Activated naive CD4-positive, alpha-beta T cell treated with anti-CD3 and anti-CD28 coated beads, Interleukin-2, amount 10 ng/mL, durations not matched to agents 7 days and 5 days (primary cell): ENCODE measurements at regions of chr11 and their contacts with region 1.

Region 1: DNA sequence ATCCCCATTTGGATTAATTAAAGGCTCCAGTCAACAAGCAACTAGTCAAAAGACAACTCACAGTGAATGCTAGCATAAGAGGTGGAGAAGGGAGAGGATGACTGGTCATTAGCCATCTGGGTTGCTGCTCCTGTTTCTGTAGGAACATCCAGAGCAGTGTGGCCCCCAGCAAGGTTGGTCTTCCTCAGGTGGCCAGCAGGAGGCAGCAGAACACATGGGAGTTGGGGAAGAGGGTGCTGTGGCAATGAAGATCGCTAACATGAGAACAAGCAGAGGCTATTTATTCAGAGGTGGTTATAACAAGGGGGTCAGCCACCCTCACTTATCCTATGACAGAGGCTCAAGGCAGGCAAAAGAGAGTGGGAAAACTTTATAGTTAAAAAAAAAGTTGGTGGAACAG is 21.3 kb downstream of the IZUMO1R start:
- DNase-seq: peak; percentile 75
- H3K4me3 Mint-ChIP-seq: no peak overlapping the region
- H3K27ac Mint-ChIP-seq: no peak overlapping the region
- H3K4me1 Mint-ChIP-seq: no peaks in the 10 kb centered on the region
- H3K27me3 Mint-ChIP-seq: no peaks in the 10 kb centered on the region

Region 2: GRCh38 chr11:94504689-94505293 is 179.1 kb after region 1 on chr11:
- CTCF ChIA-PET with region 1: interaction called, 11 read pairs
- DNase-seq: no peak
- H3K4me3 Mint-ChIP-seq: no peak overlapping the region
- H3K27ac Mint-ChIP-seq: no peak overlapping the region
- H3K4me1 Mint-ChIP-seq: no peaks in the 10 kb centered on the region
- H3K27me3 Mint-ChIP-seq: no peaks in the 10 kb centered on the region